ENCODE measurements at regions of chr21 and their contacts with region 1.

Region 1: DNA sequence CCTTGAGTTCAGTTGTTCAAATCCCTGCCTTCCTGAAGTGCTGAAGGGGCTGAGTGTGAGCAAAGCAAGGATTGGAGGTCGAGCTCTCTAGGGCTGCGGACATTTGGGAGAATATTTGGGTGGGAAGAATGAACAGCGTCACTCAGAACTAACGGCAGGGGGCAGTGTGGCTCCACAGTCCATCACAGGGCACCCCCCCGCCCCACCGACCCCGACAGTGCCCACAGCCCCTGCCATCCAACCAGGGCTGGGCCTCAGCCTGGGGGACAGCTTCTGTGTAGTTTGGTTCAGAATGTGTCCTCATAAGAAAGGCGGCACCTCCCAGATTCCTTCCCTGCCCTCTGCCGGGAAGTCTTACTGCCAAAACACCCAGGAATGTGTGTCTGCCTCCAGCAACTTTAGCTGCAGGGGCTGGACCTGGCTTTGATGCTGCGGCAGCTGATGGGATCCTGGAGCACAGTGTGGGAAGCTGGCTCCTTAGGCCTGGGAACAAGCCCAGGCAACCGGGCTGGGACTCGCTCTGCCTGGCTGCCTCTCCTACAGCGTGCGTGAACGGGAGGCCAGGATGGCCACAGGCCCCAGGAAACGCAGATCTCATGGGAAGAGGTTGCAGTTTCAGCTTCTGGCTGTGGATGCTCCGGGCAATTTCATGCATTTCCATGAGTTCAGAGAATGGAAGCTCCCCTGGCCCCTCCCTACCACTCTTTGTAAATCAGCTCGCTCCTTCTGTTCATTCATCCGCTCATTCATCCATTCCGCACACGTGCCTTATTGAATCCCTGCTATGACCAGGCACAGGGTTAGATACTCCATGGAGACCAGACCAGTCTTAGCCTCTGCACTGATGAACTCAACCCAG is 104.9 kb upstream of the TMPRSS2 start:
- H3K4me3 Mint-ChIP-seq: no peak overlapping the region
- H3K27ac Mint-ChIP-seq: no peak overlapping the region
- H3K4me1 Mint-ChIP-seq: peaks cover 4% of the 10 kb centered on the region
- H3K27me3 Mint-ChIP-seq: peaks cover 38% of the 10 kb centered on the region

Region 2: GRCh38 chr21:41283211-41283818 is 329.6 kb before region 1 on chr21:
- intact Hi-C with region 1: loop called (anchors 5 kb)
- H3K4me3 Mint-ChIP-seq: no peak overlapping the region
- H3K27ac Mint-ChIP-seq: no peak overlapping the region
- H3K4me1 Mint-ChIP-seq: no peaks in the 10 kb centered on the region
- H3K27me3 Mint-ChIP-seq: peaks cover 17% of the 10 kb centered on the region

Region 3: DNA sequence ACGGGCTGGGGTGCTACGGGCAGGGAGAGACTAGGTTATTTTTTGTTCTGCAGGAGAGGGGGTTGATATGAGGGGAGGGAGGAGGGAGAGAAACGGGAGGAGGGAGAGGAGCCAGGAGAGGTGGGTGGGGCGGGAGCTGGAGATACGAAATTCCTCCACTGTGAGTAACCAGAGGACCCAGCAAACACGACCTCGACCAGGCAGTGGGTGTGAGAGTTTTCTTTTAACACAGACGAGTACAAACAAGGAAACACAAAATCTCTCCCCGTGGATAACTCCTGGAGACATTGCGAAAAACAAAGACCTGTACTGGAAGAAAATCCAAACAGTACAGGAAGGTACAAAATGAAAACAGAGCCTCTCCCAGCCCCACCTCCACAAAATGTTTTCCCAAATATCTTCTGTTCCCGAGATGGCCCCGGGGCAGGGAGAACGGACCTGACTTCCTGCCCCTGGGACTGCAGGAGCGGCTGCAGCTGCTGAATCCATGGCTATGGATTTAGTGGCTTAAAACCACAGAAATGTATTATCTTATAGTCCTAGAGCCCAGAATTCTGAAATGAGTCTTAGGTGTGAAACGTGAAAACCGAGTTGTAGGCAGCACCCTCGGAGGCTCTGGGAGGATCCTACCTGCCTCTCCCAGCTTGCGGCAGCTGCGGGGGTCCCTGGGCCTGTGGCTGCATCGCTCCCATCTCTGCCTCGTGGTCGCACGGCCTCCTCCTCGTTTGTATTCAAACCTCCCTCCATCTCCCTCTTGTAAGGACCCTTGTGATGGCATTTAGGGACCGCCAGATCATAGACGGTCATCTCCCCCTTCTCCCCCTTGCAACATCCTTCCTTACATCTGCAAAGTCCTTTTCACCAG is 71.7 kb after region 1 on chr21:
- intact Hi-C with region 1: no loop called
- H3K4me3 Mint-ChIP-seq: no peak overlapping the region
- H3K27ac Mint-ChIP-seq: no peak overlapping the region
- H3K4me1 Mint-ChIP-seq: peaks cover 9% of the 10 kb centered on the region
- H3K27me3 Mint-ChIP-seq: peaks cover 21% of the 10 kb centered on the region

Region 4: GRCh38 chr21:41777951-41778874 is 165.3 kb after region 1 on chr21:
- intact Hi-C with region 1: loop called (anchors 1 kb)
- H3K4me3 Mint-ChIP-seq: no peak overlapping the region
- H3K27ac Mint-ChIP-seq: no peak overlapping the region
- H3K4me1 Mint-ChIP-seq: peaks cover 5% of the 10 kb centered on the region
- H3K27me3 Mint-ChIP-seq: peaks cover 58% of the 10 kb centered on the region

Region 5: DNA sequence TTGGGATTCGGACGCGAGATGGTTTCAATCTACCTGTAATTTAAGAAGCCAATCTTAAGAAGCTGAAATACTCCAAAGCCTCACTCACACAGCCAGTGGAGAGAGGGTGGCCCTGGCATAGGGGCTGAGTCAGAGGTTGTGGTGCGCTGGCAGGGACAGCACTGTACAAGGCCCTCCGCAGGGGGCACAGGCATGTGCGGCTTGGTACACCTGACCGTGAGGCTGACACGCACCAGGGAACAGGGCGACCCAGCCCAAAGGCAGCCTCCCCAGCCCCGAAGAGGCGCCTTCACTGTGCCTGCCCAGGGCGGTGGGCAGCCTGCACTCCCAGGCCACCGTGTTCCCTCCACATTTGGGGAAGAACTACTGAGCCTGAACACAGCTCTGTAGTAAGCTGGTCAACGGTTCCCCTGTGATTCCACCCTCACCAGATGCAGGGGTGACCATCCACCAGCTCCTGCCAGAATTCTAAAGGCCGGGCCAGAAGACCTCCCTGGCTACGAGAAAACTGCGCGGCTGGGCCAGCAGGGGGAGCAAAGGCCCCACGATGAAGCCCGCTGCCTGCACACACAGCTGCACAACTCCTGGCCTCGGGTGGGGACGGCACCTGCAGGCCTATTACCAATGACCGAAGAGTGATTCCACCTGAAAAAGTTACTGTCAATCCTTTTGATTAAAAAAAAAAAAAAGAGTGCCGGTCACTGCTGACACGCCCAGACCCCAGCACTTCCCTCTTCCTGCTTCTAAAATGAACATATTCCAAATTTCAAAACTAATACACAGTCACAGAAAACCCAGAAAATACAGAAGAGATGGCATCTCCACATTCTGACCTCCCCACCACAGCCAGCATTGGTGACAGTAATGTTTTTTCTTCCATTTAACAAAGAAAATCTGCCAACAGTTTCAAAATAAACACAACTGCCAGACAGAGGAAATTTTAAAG is 203.6 kb after region 1 on chr21:
- intact Hi-C with region 1: loop called (anchors 2 kb)
- H3K4me3 Mint-ChIP-seq: peak overlapping the region; percentile 41
- H3K27ac Mint-ChIP-seq: no peak overlapping the region
- H3K4me1 Mint-ChIP-seq: peaks cover 5% of the 10 kb centered on the region
- H3K27me3 Mint-ChIP-seq: no peaks in the 10 kb centered on the region

Region 6: DNA sequence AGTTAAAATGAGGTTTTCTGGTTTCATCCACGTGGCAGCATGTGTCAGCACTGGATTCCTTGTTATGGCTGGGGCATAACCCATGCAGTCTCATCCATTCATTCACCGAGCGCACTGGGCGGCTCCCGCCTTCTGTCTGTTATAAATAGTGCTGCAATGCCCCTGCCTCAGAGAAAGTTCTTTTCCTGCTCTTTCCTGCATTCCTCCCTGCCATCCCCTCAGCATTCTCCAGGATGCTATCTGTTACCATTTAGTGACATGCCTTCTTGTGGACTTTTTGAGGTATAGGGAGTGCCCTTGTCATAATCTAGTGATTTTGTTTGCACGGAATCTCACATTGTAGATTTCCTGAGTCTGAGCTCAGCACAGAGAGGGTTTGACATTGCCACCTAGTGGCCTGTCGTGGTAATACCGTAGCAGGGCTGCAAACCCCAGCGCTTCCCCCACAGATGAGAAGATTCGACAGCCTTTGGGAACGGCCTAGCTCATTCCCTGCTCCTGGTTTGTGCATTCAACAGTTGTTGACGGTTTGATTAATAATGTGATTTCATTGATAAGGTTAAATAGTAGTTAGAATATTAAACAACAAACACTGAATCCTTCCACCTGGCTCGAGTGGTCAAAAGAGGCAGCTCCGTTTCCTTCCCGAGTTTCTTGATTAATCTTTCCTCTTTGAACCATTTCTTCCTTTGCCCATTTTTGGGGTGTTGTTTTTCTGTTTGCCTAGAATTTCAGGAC is 504.5 kb after region 1 on chr21:
- intact Hi-C with region 1: loop called (anchors 10 kb)
- H3K4me3 Mint-ChIP-seq: peak overlapping the region; percentile 49
- H3K27ac Mint-ChIP-seq: peak overlapping the region; percentile 1
- H3K4me1 Mint-ChIP-seq: peaks cover 57% of the 10 kb centered on the region
- H3K27me3 Mint-ChIP-seq: peaks cover 63% of the 10 kb centered on the region